Activated naive CD4-positive, alpha-beta T cell treated with anti-CD3 and anti-CD28 coated beads for 36 hours (primary cell): ENCODE measurements at regions of chr21 and their contacts with region 1.

Region 1: GRCh38 chr21:28745131-28746016 is 247.3 kb downstream of the LTN1 start:
- DNase-seq: peak; percentile 87
- H3K4me3 Mint-ChIP-seq: no peak overlapping the region
- H3K27ac Mint-ChIP-seq: no peak overlapping the region
- H3K4me1 Mint-ChIP-seq: no peaks in the 10 kb centered on the region
- H3K27me3 Mint-ChIP-seq: peaks cover 4% of the 10 kb centered on the region

Region 2: DNA sequence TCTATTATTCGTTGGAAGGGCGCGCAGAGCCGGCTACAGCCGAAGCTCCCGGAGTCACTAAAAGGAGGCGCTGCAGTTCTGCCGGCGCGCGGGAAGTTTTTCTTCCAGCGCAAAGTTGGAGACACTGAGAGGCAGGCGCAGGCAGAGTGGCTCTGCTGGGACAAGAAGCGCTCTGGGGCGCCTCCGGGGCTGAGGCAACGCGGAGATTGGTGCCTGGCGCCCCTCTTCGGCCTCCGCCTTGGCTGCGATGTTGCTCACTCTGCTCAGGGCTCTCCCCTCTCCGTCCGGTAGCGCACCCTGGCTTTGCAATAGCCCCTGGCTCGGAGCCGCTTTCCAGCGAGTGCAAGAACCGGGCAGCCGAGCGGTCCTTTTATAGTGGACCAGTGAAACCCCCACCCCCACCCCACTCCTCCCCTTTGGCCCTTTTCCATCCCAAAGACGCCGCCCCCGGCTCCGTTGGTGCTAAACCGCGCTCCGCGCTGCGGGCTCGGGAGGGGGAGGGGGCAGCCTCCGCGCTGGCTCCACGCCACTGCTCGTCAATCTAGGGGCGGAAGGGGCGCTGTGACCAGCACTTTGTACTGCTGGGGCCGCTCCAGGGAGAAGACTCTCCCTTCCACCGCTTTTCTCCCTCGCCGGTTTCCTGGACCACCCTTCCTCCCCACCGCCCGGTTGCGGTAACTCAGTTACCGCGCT is 1900.2 kb before region 1 on chr21 and contains the start of gene ADAMTS1:
- CTCF ChIA-PET with region 1: interaction called, 9 read pairs
- intact Hi-C with region 1: loop called (anchors 1 kb)
- DNase-seq: peak; percentile 27
- H3K4me3 Mint-ChIP-seq: peak within 1 kb of the TSS; percentile 72
- H3K27ac Mint-ChIP-seq: no peak within 1 kb of the TSS
- H3K4me1 Mint-ChIP-seq: peaks cover 33% of the 10 kb centered on the region
- H3K27me3 Mint-ChIP-seq: peaks cover 73% of the 10 kb centered on the region
- total RNA-seq, gene ADAMTS1: not detected

Region 3: DNA sequence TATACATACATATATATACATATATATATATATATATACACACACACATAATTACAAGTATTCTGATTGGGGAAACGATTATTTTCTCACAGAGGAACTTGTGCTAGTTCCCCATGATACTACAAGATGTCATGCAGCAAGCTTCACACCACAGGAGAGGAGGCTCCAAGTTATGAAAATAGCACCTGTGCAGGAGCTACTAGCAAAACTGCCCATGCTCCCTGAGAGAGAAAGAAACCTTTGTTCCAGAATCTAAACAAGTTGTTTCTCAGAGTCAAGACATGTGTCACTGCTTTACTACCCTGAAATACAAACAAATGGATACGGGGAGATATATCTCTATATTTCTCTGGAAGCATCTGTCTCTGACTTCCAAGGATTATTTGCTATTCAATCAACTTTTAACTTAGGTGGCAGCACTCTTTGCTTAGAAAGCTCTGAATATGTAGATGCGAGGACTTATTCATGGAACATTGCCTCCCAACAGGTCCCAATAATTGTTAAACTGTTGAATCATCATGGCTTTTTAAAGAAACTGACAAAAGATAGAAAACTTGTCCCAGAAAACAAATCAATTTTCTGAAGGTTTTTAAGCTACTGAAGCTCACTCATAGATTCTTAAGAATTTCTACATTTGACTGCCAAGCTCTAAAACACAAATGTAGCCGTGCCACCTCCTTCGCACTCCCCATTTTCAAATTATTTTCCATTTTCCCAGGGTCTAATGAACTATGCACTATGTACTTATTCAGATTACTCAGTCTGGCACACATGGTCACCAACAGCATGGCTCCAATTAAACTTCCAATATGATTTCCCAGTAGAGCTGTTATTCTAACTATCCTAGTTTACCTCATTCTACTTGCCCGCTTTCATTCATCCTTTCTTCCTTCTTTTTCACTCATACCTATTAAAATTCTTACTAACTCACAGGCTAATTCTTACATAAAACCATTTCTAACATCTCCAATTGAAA is 681.8 kb before region 1 on chr21:
- CTCF ChIA-PET with region 1: no interaction called
- intact Hi-C with region 1: loop called (anchors 10 kb)
- DNase-seq: no peak
- H3K4me3 Mint-ChIP-seq: no peak overlapping the region
- H3K27ac Mint-ChIP-seq: no peak overlapping the region
- H3K4me1 Mint-ChIP-seq: peaks cover 2% of the 10 kb centered on the region
- H3K27me3 Mint-ChIP-seq: no peaks in the 10 kb centered on the region

Region 4: GRCh38 chr21:28522014-28522799 is 223.2 kb before region 1 on chr21:
- CTCF ChIA-PET with region 1: interaction called, 137 read pairs
- intact Hi-C with region 1: loop called (anchors 1 kb)
- DNase-seq: peak; percentile 20
- H3K4me3 Mint-ChIP-seq: no peak overlapping the region
- H3K27ac Mint-ChIP-seq: no peak overlapping the region
- H3K4me1 Mint-ChIP-seq: no peaks in the 10 kb centered on the region
- H3K27me3 Mint-ChIP-seq: peaks cover 8% of the 10 kb centered on the region

Region 5: GRCh38 chr21:28761674-28762356 is 16.4 kb after region 1 on chr21:
- CTCF ChIA-PET with region 1: interaction called, 24 read pairs
- intact Hi-C with region 1: no loop called
- DNase-seq: no peak
- H3K4me3 Mint-ChIP-seq: no peak overlapping the region
- H3K27ac Mint-ChIP-seq: no peak overlapping the region
- H3K4me1 Mint-ChIP-seq: peaks cover 2% of the 10 kb centered on the region
- H3K27me3 Mint-ChIP-seq: no peaks in the 10 kb centered on the region

Region 6: DNA sequence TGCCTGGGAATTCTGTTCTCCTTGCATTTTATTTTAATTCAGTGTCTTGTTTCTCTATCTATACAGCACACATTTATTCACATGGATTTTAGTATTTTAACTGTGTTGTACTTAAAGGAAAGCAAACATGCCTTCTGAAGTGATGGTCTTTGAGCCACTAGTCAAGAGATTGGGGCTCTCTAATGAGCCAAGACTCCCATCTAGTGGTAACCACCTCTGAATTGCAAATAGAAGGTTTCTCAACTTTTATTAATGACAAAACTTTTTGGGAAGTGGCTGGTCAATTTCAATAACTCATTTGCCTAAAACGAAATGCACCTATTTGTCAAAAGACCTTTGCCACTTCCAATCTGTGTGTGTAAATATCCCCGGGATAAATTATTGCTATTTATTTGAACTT is 47.7 kb after region 1 on chr21:
- CTCF ChIA-PET with region 1: interaction called, 3 read pairs
- intact Hi-C with region 1: loop called (anchors 2 kb)
- DNase-seq: no peak
- H3K4me3 Mint-ChIP-seq: no peak overlapping the region
- H3K27ac Mint-ChIP-seq: no peak overlapping the region
- H3K4me1 Mint-ChIP-seq: no peaks in the 10 kb centered on the region
- H3K27me3 Mint-ChIP-seq: no peaks in the 10 kb centered on the region